A673 (cell line): ENCODE measurements at regions of chr10 and their contacts with region 1.

Region 1: GRCh38 chr10:62268399-62269114 is at the start of gene RTKN2:
- DNase-seq: peak; percentile 95
- H3K4me3 ChIP-seq: peak within 1 kb of the TSS; percentile 91
- H3K27ac ChIP-seq: peak within 1 kb of the TSS; percentile 73
- H3K4me1 ChIP-seq: peaks cover 37% of the 10 kb centered on the region
- H3K27me3 ChIP-seq: no peaks in the 10 kb centered on the region
- CTCF ChIP-seq: no peak
- total RNA-seq, gene RTKN2: 21.9 and 22.3 TPM in 2 replicates

Region 2: DNA sequence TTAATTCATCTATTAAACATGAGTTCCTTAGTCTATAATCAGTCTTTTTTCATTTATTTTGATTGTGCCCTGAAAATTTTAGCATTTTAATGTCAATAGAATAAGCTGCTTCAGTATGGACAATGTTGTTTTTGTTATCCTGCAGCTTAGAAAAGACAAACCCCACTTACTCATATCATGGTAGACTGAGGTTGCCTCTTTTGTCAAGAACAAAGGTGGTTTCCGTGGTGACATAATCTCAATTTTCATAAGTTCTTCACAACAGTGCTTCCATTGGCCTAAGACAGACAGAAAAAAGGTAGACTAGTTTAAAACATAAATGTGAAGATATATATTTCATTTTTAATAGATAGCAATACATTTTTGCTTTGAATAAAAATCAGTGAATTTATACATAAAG is 69.0 kb before region 1 on chr10:
- CTCF ChIA-PET with region 1: no interaction called
- POLR2A ChIA-PET with region 1: no interaction called
- intact Hi-C with region 1: no loop called
- DNase-seq: no peak
- H3K4me3 ChIP-seq: no peak overlapping the region
- H3K27ac ChIP-seq: no peak overlapping the region
- H3K4me1 ChIP-seq: peaks cover 51% of the 10 kb centered on the region
- H3K27me3 ChIP-seq: no peaks in the 10 kb centered on the region
- CTCF ChIP-seq: no peak

Region 3: GRCh38 chr10:62422068-62422590 is 153.6 kb after region 1 on chr10:
- CTCF ChIA-PET with region 1: no interaction called
- POLR2A ChIA-PET with region 1: no interaction called
- intact Hi-C with region 1: loop called (anchors 5 kb)
- DNase-seq: no peak
- H3K4me3 ChIP-seq: no peak overlapping the region
- H3K27ac ChIP-seq: no peak overlapping the region
- H3K4me1 ChIP-seq: peaks cover 11% of the 10 kb centered on the region
- H3K27me3 ChIP-seq: no peaks in the 10 kb centered on the region
- CTCF ChIP-seq: no peak